Heart right ventricle (tissue), 16 donors: ENCODE measurements at regions of chr5 and their contacts with region 1.

Region 1: DNA sequence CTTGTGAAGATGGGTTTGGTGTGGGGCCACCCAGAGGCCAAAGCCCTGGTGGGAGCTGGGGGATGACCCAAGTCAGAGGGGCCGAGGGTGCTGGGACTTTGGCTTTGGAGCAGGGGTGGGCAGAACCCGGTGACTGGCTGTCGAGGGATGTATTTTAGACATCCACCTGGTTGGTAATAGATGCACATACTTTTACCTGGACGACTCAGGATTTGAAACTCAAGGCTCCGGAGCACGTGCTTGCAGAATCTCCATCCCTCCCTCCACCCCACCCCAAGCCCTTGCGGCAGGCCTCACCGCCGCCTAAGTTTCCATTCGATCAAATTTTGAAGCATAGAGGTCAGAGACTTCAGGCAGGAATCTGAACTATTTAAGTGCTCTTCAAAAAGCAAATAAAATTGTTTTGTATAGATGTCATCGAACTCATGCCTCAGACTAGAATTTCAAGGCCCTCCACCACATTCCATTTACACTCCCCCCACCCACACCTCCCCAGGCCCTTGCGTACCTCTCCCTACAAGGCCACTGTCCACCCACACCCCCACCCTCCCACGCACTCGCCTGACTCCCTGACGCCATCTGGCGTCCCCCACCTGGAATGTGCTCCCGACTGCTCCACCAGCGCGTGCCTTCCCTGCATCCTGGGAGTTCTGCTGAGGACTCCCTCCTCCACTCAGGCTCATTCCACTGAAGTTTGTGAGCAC is 56.6 kb upstream of the RPL26L1 start:
- DNase-seq: peak; percentile 81 to 82
- ATAC-seq: peak; percentile 61 to 77 (median 68)
- H3K4me3 ChIP-seq: no peak overlapping the region
- H3K27ac ChIP-seq: peak overlapping the region; percentile 47 to 98 (median 82)
- H3K4me1 ChIP-seq: peaks cover 37 to 86% (median 71%) of the 10 kb centered on the region in 9 donors
- H3K27me3 ChIP-seq: no peaks in the 10 kb centered on the region
- CTCF ChIP-seq: peak; percentile 23 to 70 (median 56)

Region 2: GRCh38 chr5:172764849-172765765 is 137.5 kb before region 1 on chr5:
- intact Hi-C with region 1: loop called in 7 of 10 experiments (anchors 2 to 10 kb)
- DNase-seq: peak; percentile 90 to 100
- ATAC-seq: peak; percentile 64 to 82 (median 72)
- H3K4me3 ChIP-seq: peak overlapping the region in 9 of 10 donors; percentile 6 to 99 (median 93)
- H3K27ac ChIP-seq: peak overlapping the region; percentile 95 to 100 (median 100)
- H3K4me1 ChIP-seq: peaks cover 8 to 63% (median 37%) of the 10 kb centered on the region in 9 donors
- H3K27me3 ChIP-seq: no peaks in the 10 kb centered on the region
- CTCF ChIP-seq: no peak

Region 3: GRCh38 chr5:172849606-172850453 is 52.8 kb before region 1 on chr5:
- intact Hi-C with region 1: loop called in 1 of 10 experiments (anchors 10 kb)
- DNase-seq: no peak
- ATAC-seq: peak in 2 of 8 donors; percentile 9 to 20
- H3K4me3 ChIP-seq: no peak overlapping the region
- H3K27ac ChIP-seq: no peak overlapping the region
- H3K4me1 ChIP-seq: peaks cover 9 to 66% (median 30%) of the 10 kb centered on the region in 9 donors
- H3K27me3 ChIP-seq: no peaks in the 10 kb centered on the region
- CTCF ChIP-seq: no peak

Region 4: GRCh38 chr5:172860520-172861443 is 41.9 kb before region 1 on chr5:
- intact Hi-C with region 1: loop called in 4 of 10 experiments (anchors 5 to 10 kb)
- DNase-seq: peak; percentile 88 to 92
- ATAC-seq: peak; percentile 86 to 94 (median 90)
- H3K4me3 ChIP-seq: peak overlapping the region in 7 of 10 donors; percentile 1 to 39 (median 20)
- H3K27ac ChIP-seq: peak overlapping the region; percentile 86 to 97 (median 92)
- H3K4me1 ChIP-seq: peaks cover 41 to 82% (median 65%) of the 10 kb centered on the region in 9 donors
- H3K27me3 ChIP-seq: no peaks in the 10 kb centered on the region
- CTCF ChIP-seq: no peak

Region 5: DNA sequence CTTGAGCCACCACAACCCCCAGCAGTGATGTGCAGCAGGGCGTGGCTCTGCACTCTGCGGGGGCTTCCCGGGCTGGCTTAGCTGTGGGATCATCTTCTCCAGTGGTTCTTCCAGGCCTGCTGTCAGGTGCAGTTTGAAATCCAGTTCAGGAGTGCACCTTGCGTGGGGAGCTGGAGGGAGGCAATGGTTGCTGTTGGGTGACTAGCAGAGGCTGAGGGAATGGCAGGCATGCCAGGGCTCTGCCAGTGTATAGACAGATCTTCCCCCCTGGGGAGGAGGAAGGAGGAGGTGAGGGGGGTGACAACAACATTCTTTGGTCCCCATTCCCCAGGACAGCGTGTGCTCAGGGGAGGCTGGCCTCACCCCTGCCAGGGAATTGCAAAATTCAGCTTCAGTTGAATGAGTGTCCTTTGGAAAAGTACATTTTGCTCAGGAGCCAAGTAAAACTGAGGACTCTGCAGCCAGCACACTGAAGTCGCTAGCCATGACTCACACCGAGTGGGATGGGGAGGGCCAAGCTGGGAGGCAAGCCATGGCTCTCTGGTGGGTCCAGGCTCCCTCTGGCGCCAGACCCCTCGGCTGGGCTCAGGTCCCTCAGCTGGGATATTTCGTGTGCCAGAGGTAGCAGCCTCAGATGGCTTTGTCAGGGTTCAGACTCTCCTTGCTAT is 33.6 kb before region 1 on chr5:
- intact Hi-C with region 1: loop called in 4 of 10 experiments (anchors 2 to 5 kb)
- DNase-seq: peak; percentile 80 to 81
- ATAC-seq: peak; percentile 46 to 81 (median 70)
- H3K4me3 ChIP-seq: no peak overlapping the region
- H3K27ac ChIP-seq: peak overlapping the region; percentile 82 to 97 (median 92)
- H3K4me1 ChIP-seq: peaks cover 60 to 98% (median 89%) of the 10 kb centered on the region in 9 donors
- H3K27me3 ChIP-seq: no peaks in the 10 kb centered on the region
- CTCF ChIP-seq: peak in 5 of 9 donors; percentile 19 to 48 (median 37)